PC-9 (cell line): ENCODE measurements at regions of chr14 and their contacts with region 1.

Region 1: DNA sequence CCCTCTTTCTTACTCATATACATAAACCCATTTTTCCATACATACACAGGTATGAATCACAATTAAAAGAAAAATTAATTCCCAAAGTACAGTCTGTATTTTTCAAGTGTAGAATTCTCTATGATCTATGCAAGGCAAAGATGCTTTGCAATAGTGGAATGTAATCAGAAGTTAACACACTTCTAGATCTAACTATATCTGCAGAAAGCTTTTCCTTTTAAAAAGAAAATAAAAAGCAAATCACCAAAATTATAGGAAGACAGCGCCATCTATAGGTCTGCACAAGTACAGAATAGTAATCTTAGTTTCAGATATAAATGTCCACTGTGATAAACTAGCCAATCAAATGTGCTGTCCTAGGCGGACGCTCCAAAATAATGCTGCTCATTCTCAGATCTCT is 22.0 kb downstream of the SLC25A21 start:
- DNase-seq: no peak
- H3K4me3 ChIP-seq: no peak overlapping the region
- H3K27ac ChIP-seq: no peak overlapping the region
- H3K4me1 ChIP-seq: no peaks in the 10 kb centered on the region
- H3K27me3 ChIP-seq: no peaks in the 10 kb centered on the region
- CTCF ChIP-seq: peak; percentile 79

Region 2: GRCh38 chr14:35883677-35884293 is 1266.6 kb before region 1 on chr14:
- CTCF ChIA-PET with region 1: no interaction called
- POLR2A ChIA-PET with region 1: no interaction called
- intact Hi-C with region 1: loop called (anchors 5 kb)
- DNase-seq: peak in 1 of 2 experiments; percentile 17
- H3K4me3 ChIP-seq: no peak overlapping the region
- H3K27ac ChIP-seq: no peak overlapping the region
- H3K4me1 ChIP-seq: peaks cover 7% of the 10 kb centered on the region
- H3K27me3 ChIP-seq: no peaks in the 10 kb centered on the region
- CTCF ChIP-seq: peak; percentile 64

Region 3: DNA sequence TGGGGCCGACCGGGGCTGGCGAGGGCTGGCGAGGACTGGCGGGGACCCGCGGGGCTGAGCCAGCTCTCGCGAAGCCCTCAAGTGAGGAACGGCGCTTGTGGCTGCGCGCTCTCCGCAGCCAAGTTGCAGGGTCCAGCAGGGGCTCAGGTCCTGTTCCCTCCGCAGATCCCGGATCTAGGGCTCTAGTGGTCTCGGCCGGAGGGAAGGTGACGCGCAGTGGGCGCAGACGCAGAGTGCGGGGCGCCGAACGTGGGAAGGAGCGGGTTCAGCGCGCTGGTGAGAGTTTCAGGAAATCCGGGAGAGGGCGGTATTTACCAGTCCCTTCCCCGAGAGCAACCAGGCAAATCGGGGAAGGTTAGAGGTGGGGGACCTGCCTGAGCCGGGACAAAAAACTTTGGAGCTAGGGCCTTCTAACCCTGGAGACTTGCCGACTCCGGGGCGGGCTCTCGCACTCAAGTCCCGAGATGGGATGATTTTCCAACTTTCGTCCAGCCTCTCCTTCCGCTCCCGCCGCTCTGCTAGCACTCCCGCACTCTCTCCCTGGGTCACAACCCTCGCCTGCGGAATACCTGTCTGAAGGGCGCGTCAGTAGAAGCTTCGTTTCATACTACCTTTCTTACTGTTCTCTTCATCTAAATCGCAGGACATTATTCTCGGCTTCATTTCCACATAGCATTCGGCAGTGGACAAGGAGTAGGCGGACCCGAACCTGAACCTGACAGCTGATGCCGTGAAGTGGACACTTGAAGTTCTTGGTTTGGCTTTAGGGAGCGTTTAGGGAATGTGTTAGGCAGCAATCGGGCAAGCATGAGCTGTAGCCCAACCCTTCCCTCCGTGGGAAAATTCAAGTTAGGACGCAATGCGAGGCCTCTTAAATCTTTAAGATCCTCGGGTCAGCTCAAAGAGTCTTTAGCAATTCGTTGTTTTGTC is 502.3 kb before region 1 on chr14:
- CTCF ChIA-PET with region 1: interaction called, 7 read pairs
- POLR2A ChIA-PET with region 1: no interaction called
- intact Hi-C with region 1: loop called (anchors 1 kb)
- DNase-seq: peak in 1 of 2 experiments; percentile 55
- H3K4me3 ChIP-seq: peak overlapping the region; percentile 31; the same call in 1 of the 2 replicates
- H3K27ac ChIP-seq: no peak overlapping the region
- H3K4me1 ChIP-seq: no peaks in the 10 kb centered on the region
- H3K27me3 ChIP-seq: no peaks in the 10 kb centered on the region
- CTCF ChIP-seq: peak; percentile 51; the same call in 1 of the 2 replicates

Region 4: GRCh38 chr14:37230551-37231194 is 80.3 kb after region 1 on chr14:
- CTCF ChIA-PET with region 1: no interaction called
- POLR2A ChIA-PET with region 1: no interaction called
- intact Hi-C with region 1: loop called (anchors 2 kb)
- DNase-seq: peak in 1 of 2 experiments; percentile 57
- H3K4me3 ChIP-seq: no peak overlapping the region
- H3K27ac ChIP-seq: no peak overlapping the region
- H3K4me1 ChIP-seq: no peaks in the 10 kb centered on the region
- H3K27me3 ChIP-seq: no peaks in the 10 kb centered on the region
- CTCF ChIP-seq: peak; percentile 80